ENCODE measurements at regions of chr1 and their contacts with region 1.

Region 1: DNA sequence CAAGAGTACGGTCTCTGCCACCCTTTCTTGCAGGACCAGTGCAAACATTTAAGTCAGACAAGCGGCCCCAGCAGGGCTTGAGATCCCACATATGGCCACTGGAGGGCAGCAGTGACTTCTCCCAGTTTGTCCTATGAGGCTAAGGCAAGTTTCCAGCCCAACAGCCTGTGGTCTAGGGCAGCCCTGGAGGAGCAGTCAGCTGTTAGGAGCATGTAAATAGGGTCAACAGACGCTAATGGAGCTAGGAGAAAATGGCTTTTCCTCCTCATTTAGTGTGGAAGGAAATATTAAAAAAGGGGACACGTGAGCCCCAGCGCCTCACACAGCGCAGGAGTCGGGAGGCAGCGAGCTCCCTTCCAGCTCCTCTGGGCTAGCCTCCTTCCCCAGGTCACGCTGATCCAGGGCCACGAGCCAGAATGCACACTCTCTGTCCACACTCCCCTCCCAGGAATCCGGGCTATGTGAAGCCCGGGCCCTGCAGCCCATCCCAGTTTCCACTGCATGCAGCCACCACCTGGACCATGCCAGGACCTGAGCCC is 95.6 kb downstream of the LAMC2 start:
- DNase-seq: peak; percentile 90 to 95 (median 93)
- H3K4me3 ChIP-seq: no peak overlapping the region
- H3K27ac ChIP-seq: peak overlapping the region; percentile 22 to 32
- H3K4me1 ChIP-seq: peaks cover 7% of the 10 kb centered on the region
- H3K27me3 ChIP-seq: no peaks in the 10 kb centered on the region
- CTCF ChIP-seq: peak; percentile 84 to 98 (median 91)
- EP300 ChIP-seq: no peak
- POLR2A ChIP-seq: no peak

Region 2: GRCh38 chr1:183129921-183130690 is 151.5 kb before region 1 on chr1:
- intact Hi-C with region 1: no loop called
- DNase-seq: no peak
- H3K4me3 ChIP-seq: no peak overlapping the region
- H3K27ac ChIP-seq: no peak overlapping the region
- H3K4me1 ChIP-seq: peaks cover 2% of the 10 kb centered on the region
- H3K27me3 ChIP-seq: no peaks in the 10 kb centered on the region
- CTCF ChIP-seq: no peak
- EP300 ChIP-seq: no peak
- POLR2A ChIP-seq: no peak

Region 3: GRCh38 chr1:183318433-183318832 is 36.8 kb after region 1 on chr1:
- intact Hi-C with region 1: loop called in 3 of 4 experiments (anchors 2 to 5 kb)
- DNase-seq: peak; percentile 78 to 90 (median 82)
- H3K4me3 ChIP-seq: no peak overlapping the region
- H3K27ac ChIP-seq: peak overlapping the region; percentile 49 to 58
- H3K4me1 ChIP-seq: peaks cover 3% of the 10 kb centered on the region
- H3K27me3 ChIP-seq: no peaks in the 10 kb centered on the region
- CTCF ChIP-seq: peak; percentile 61 to 69 (median 65)
- EP300 ChIP-seq: no peak
- POLR2A ChIP-seq: no peak

Region 4: DNA sequence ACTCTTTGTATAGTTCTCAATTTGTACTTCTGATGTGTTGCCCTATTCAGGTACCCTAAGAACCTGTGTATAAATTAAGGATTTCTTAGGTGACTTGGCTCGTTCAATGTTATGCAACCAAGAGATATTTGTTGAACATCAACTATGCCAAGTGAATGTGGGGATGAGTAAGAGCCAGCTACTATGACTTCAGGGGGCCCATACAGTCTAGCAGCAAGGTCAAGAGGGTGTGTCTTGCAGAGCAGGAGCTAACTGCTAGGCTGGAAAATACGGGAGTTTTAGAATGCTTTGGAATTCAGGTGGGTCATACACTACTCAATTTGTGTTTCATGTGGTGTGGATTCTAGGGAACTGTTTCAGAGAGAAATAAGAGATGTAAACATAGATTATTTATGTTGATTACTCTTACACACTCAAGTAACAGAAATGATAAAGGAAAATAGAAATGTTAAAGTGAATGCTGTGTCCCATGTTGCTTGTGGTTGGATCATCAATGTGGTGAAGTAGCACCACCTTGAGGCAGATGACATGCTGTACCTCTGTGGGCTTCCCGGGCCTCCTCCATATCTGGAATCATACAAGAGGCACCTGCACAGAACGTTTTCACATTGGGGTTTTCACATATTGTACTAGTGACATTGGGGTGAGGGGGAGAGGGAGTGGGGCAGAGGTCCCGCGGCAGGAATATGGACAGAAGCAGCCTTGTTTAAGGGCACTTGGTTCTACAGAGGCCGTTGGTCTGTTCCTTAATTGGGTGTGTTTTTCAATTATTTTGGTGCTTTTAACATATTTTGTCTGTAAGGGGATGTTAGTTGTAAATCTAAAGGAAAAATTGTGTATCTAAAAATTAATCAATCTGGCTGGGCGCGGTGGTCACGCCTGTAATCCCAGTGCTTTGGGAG is 341.5 kb after region 1 on chr1:
- intact Hi-C with region 1: loop called in 1 of 4 experiments (anchors 10 kb)
- DNase-seq: peak; percentile 37 to 66 (median 54)
- H3K4me3 ChIP-seq: no peak overlapping the region
- H3K27ac ChIP-seq: no peak overlapping the region
- H3K4me1 ChIP-seq: peaks cover 3% of the 10 kb centered on the region
- H3K27me3 ChIP-seq: no peaks in the 10 kb centered on the region
- CTCF ChIP-seq: peak; percentile 36 to 64 (median 50)
- EP300 ChIP-seq: no peak
- POLR2A ChIP-seq: no peak

Measured in ovary (tissue), 10 donors.